GM12878 (cell line): ENCODE measurements at regions of chr5 and their contacts with region 1.

Region 1: GRCh38 chr5:119031905-119032304 is 39.0 kb upstream of the DMXL1 start:
- DNase-seq: peak; percentile 73
- ATAC-seq: peak; percentile 93
- H3K4me3 ChIP-seq: peak overlapping the region; percentile 29; the same call in 1 of the 2 replicates
- H3K27ac ChIP-seq: peak overlapping the region; percentile 95
- H3K4me1 ChIP-seq: peaks cover 39% of the 10 kb centered on the region
- H3K27me3 ChIP-seq: no peaks in the 10 kb centered on the region
- CTCF ChIP-seq: no peak
- EP300 ChIP-seq: no peak
- POLR2A ChIP-seq: peak; percentile 51; the same call in 1 of the 2 replicates
- RAD21 ChIP-seq: no peak

Region 2: GRCh38 chr5:119049824-119050449 is 18.0 kb after region 1 on chr5:
- CTCF ChIA-PET with region 1: interaction called, 3 read pairs
- POLR2A ChIA-PET with region 1: no interaction called
- RAD21 ChIA-PET with region 1: no interaction called
- SMC1A ChIA-PET with region 1: interaction called, 10 read pairs
- in situ Hi-C with region 1: no loop called
- intact Hi-C with region 1: no loop called
- DNase-seq: no peak
- ATAC-seq: no peak
- H3K4me3 ChIP-seq: no peak overlapping the region
- H3K27ac ChIP-seq: no peak overlapping the region
- H3K4me1 ChIP-seq: no peaks in the 10 kb centered on the region
- H3K27me3 ChIP-seq: no peaks in the 10 kb centered on the region
- CTCF ChIP-seq: no peak
- EP300 ChIP-seq: no peak
- POLR2A ChIP-seq: no peak
- RAD21 ChIP-seq: no peak

Region 3: GRCh38 chr5:119070828-119071572 is 39.1 kb after region 1 on chr5 and contains the start of gene DMXL1:
- CTCF ChIA-PET with region 1: interaction called, 10 read pairs
- POLR2A ChIA-PET with region 1: interaction called, 7 read pairs
- RAD21 ChIA-PET with region 1: interaction called, 31 read pairs
- SMC1A ChIA-PET with region 1: interaction called, 13 read pairs
- in situ Hi-C with region 1: loop called (anchors 5 kb)
- intact Hi-C with region 1: loop called (anchors 1 kb)
- DNase-seq: peak; percentile 99
- ATAC-seq: peak; percentile 84
- H3K4me3 ChIP-seq: peak within 1 kb of the TSS; percentile 79
- H3K27ac ChIP-seq: peak within 1 kb of the TSS; percentile 91
- H3K4me1 ChIP-seq: peaks cover 5% of the 10 kb centered on the region
- H3K27me3 ChIP-seq: no peaks in the 10 kb centered on the region
- CTCF ChIP-seq: no peak
- EP300 ChIP-seq: 0 out of 4 replicates have a peak, but pooled peaks of 1 of the 2 experiments have one; percentile 8
- POLR2A ChIP-seq: peak; percentile 91
- RAD21 ChIP-seq: no peak
- polyA plus RNA-seq, gene DMXL1: 9.1 to 11.0 TPM

Region 4: GRCh38 chr5:119079318-119079921 is 47.5 kb after region 1 on chr5:
- CTCF ChIA-PET with region 1: interaction called, 10 read pairs
- POLR2A ChIA-PET with region 1: interaction called, 4 read pairs
- RAD21 ChIA-PET with region 1: interaction called, 11 read pairs
- SMC1A ChIA-PET with region 1: interaction called, 19 read pairs
- in situ Hi-C with region 1: no loop called
- intact Hi-C with region 1: loop called (anchors 1 kb)
- DNase-seq: no peak
- ATAC-seq: peak; percentile 55
- H3K4me3 ChIP-seq: peak overlapping the region; percentile 47; the same call in 1 of the 2 replicates
- H3K27ac ChIP-seq: peak overlapping the region; percentile 70
- H3K4me1 ChIP-seq: peaks cover 33% of the 10 kb centered on the region
- H3K27me3 ChIP-seq: no peaks in the 10 kb centered on the region
- CTCF ChIP-seq: no peak
- EP300 ChIP-seq: no peak
- POLR2A ChIP-seq: no peak
- RAD21 ChIP-seq: no peak